Activated T-helper 2 cell treated with anti-CD3 and anti-CD28 coated beads, Interferon-gamma antibody, Interleukin-2, Interleukin-4, amounts not matched to agents 10 μg/mL and 5 μg/mL and 100 μg/mL, durations not matched to agents 14 hours and 24 hours and 36 hours (primary cell): ENCODE measurements at regions of chr17 and their contacts with region 1.

Region 1: GRCh38 chr17:62109378-62109902 is 44.4 kb upstream of the MED13 start:
- DNase-seq: peak; percentile 66
- H3K4me3 Mint-ChIP-seq: no peak overlapping the region
- H3K27ac Mint-ChIP-seq: no peak overlapping the region
- H3K4me1 Mint-ChIP-seq: peaks cover 5% of the 10 kb centered on the region
- H3K27me3 Mint-ChIP-seq: no peaks in the 10 kb centered on the region

Region 2: GRCh38 chr17:61635913-61636432 is 473.5 kb before region 1 on chr17:
- intact Hi-C with region 1: loop called (anchors 5 kb)
- DNase-seq: no peak
- H3K4me3 Mint-ChIP-seq: no peak overlapping the region
- H3K27ac Mint-ChIP-seq: no peak overlapping the region
- H3K4me1 Mint-ChIP-seq: peaks cover 11% of the 10 kb centered on the region
- H3K27me3 Mint-ChIP-seq: peaks cover 73% of the 10 kb centered on the region

Region 3: DNA sequence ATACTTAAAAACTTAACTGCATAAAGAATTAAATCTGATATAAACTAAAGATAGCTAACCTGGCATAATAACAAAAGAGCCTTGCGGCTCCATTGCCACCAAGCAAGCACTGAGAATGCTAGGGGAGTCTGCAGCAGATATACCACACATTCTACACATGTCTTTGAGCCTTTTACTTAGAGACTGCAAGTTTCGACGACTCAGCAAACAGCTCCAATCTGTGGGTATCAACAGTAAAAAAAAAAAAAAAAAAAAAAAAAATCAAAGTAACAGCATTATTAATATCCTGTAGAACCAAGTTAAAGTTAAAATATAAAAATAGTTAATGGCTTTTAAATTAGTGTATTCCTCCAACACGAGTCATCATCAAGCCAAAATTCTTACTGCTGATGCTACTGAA is 153.8 kb before region 1 on chr17:
- intact Hi-C with region 1: no loop called
- DNase-seq: no peak
- H3K4me3 Mint-ChIP-seq: no peak overlapping the region
- H3K27ac Mint-ChIP-seq: no peak overlapping the region
- H3K4me1 Mint-ChIP-seq: no peaks in the 10 kb centered on the region
- H3K27me3 Mint-ChIP-seq: no peaks in the 10 kb centered on the region

Region 4: DNA sequence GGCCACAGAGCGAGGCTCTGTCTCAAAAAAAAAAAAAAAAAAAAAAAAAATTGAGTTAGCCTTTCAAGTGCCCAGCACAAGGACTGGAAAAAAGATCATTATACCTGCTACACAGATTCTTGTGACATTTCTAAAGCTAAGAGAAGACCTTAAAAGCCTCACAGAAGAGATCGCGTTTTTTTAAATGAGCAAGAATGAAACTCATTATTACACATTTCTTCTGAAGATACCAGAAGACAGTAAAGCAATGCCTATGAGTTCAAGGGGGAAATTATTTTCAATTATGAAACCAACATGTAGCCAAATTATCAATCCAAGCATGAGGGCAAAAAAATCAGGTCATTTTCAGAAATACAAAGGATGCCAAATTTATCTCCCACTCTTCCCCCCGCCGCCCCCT is 101.1 kb before region 1 on chr17:
- intact Hi-C with region 1: loop called (anchors 10 kb)
- DNase-seq: no peak
- H3K4me3 Mint-ChIP-seq: no peak overlapping the region
- H3K27ac Mint-ChIP-seq: peak overlapping the region; percentile 60
- H3K4me1 Mint-ChIP-seq: peaks cover 13% of the 10 kb centered on the region
- H3K27me3 Mint-ChIP-seq: no peaks in the 10 kb centered on the region

Region 5: DNA sequence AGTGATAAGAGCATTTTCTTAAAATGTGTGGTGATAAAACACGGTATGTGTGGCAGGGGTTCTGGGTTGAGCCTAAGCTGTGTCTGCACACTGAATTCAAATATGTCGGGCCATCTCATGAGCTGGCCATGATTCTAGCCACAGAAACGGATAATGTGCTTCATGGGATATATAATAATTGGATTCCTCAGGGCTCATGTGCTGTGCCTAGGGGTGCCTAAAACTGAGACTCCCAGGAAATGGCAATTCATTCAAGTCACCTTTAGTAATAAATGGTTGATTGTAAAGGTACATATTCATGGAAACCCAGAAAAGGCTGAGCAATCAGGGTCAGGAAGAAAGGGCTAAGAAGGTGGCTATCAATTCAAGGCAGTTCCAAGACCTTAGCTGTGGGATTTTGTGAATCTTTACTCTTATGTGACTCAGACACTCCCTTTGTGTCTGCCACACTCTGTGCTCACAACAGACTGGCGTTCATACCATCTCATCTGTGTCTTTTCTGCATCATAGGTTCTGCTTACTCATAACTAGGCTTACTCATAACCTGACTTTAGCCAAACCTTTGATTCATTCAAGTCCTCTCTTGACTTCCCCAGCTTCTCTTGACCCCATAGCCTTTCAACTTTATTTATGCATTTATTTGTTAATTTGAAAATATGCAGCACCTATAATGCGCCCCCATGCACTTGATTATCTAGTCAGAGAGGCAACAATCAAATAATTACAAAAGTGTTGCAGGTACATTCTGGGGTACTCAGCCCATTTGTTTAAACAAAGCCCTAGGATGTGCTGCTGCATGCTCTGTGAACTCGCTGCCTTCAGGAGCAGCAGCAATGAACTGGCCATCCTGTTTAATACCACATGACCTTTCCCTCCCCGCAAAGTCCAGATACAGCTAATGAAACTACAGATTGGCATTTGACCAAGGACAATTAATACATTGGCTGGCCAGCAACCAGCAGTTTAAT is 16.0 kb before region 1 on chr17:
- intact Hi-C with region 1: loop called (anchors 2 kb)
- DNase-seq: no peak
- H3K4me3 Mint-ChIP-seq: no peak overlapping the region
- H3K27ac Mint-ChIP-seq: peak overlapping the region; percentile 43
- H3K4me1 Mint-ChIP-seq: peaks cover 21% of the 10 kb centered on the region
- H3K27me3 Mint-ChIP-seq: no peaks in the 10 kb centered on the region